Activated T-helper 1 cell treated with anti-CD3 and anti-CD28 coated beads, Interleukin-12 subunit alpha, Interleukin-12 subunit beta, Interleukin-2, Interleukin-4 antibody, amounts not matched to agents 30 ng/mL and 10 ng/mL and 1 ng/mL, durations not matched to agents 14 hours and 24 hours and 36 hours (primary cell): ENCODE measurements at regions of chr9 and their contacts with region 1.

Region 1: GRCh38 chr9:79535534-79535933 is 36.2 kb upstream of the TLE4 start:
- DNase-seq: no peak
- H3K4me3 Mint-ChIP-seq: no peak overlapping the region
- H3K27ac Mint-ChIP-seq: no peak overlapping the region
- H3K4me1 Mint-ChIP-seq: no peaks in the 10 kb centered on the region
- H3K27me3 Mint-ChIP-seq: peaks cover 4% of the 10 kb centered on the region

Region 2: GRCh38 chr9:78919701-78920100 is 615.8 kb before region 1 on chr9:
- intact Hi-C with region 1: no loop called
- DNase-seq: no peak
- H3K4me3 Mint-ChIP-seq: no peak overlapping the region
- H3K27ac Mint-ChIP-seq: no peak overlapping the region
- H3K4me1 Mint-ChIP-seq: no peaks in the 10 kb centered on the region
- H3K27me3 Mint-ChIP-seq: no peaks in the 10 kb centered on the region

Region 3: GRCh38 chr9:79477955-79478771 is 57.4 kb before region 1 on chr9:
- intact Hi-C with region 1: loop called (anchors 10 kb)
- DNase-seq: no peak
- H3K4me3 Mint-ChIP-seq: no peak overlapping the region
- H3K27ac Mint-ChIP-seq: peak overlapping the region; percentile 16
- H3K4me1 Mint-ChIP-seq: peaks cover 6% of the 10 kb centered on the region
- H3K27me3 Mint-ChIP-seq: no peaks in the 10 kb centered on the region

Region 4: GRCh38 chr9:79571309-79572031 is 35.9 kb after region 1 on chr9 and contains the start of gene TLE4:
- intact Hi-C with region 1: no loop called
- DNase-seq: peak; percentile 100
- H3K4me3 Mint-ChIP-seq: peak within 1 kb of the TSS; percentile 70
- H3K27ac Mint-ChIP-seq: no peak within 1 kb of the TSS
- H3K4me1 Mint-ChIP-seq: peaks cover 36% of the 10 kb centered on the region
- H3K27me3 Mint-ChIP-seq: peaks cover 16% of the 10 kb centered on the region
- total RNA-seq, gene TLE4: 25.1 and 25.4 TPM in 2 replicates